ENCODE measurements at regions of chr10 and their contacts with region 1.

Region 1: GRCh38 chr10:55704944-55705343 is 656.1 kb downstream of the ZWINT start:
- DNase-seq: no peak
- H3K4me3 ChIP-seq: no peak overlapping the region
- H3K27ac ChIP-seq: no peak overlapping the region
- H3K4me1 ChIP-seq: no peaks in the 10 kb centered on the region
- H3K27me3 ChIP-seq: no peaks in the 10 kb centered on the region
- CTCF ChIP-seq: no peak
- POLR2A ChIP-seq: no peak

Region 2: DNA sequence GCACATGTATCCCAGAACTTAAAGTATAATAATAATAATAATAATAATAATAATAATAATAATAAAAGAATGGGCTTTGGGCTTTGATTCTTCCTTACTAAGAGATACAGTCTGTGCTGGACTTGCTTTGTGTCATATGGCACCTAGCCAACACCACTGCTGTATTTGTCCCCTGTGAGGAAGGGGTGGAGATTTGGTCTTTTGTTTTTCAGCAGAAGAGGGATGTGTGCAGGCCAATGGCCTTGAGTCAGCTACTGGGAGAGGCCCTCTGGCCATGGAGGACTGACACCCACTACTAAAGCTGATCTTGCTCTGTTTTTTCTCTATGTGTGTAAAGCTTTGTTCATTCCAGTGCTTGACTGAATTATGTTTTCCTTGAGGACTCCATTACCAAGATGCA is 330.9 kb before region 1 on chr10:
- intact Hi-C with region 1: no loop called
- DNase-seq: no peak
- H3K4me3 ChIP-seq: no peak overlapping the region
- H3K27ac ChIP-seq: no peak overlapping the region
- H3K4me1 ChIP-seq: no peaks in the 10 kb centered on the region
- H3K27me3 ChIP-seq: no peaks in the 10 kb centered on the region
- CTCF ChIP-seq: no peak
- POLR2A ChIP-seq: no peak

Region 3: GRCh38 chr10:55668326-55668922 is 36.5 kb before region 1 on chr10:
- intact Hi-C with region 1: no loop called
- DNase-seq: no peak
- H3K4me3 ChIP-seq: no peak overlapping the region
- H3K27ac ChIP-seq: no peak overlapping the region
- H3K4me1 ChIP-seq: no peaks in the 10 kb centered on the region
- H3K27me3 ChIP-seq: no peaks in the 10 kb centered on the region
- CTCF ChIP-seq: no peak
- POLR2A ChIP-seq: no peak

Region 4: DNA sequence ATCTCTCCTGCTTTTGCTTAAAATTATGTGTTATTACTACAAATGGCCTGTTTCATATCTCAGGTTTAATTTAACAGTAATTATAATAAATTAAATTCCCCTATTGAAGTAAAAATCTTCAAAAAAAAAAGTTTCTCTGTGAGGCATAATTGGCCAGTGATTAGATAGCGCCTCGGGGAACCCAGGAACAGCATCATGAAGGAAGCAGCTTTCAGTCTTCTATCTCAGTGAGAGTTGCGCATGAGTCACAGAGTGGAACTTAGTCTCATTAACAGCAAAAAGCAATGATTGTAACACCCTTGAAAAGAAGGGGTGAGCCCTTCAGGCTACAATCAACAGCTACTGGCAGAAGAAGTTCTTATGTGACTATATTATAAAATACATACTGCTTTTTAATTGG is 1162.3 kb after region 1 on chr10:
- intact Hi-C with region 1: loop called (anchors 5 kb)
- DNase-seq: no peak
- H3K4me3 ChIP-seq: no peak overlapping the region
- H3K27ac ChIP-seq: no peak overlapping the region
- H3K4me1 ChIP-seq: no peaks in the 10 kb centered on the region
- H3K27me3 ChIP-seq: peaks cover 0 to 2% of the 10 kb centered on the region in 2 donors
- CTCF ChIP-seq: no peak
- POLR2A ChIP-seq: no peak

Measured in breast epithelium (tissue), 4 donors.